ENCODE measurements at regions of chr2 and their contacts with region 1.

Region 1: GRCh38 chr2:112542123-112542983 is at the start of gene POLR1B:
- DNase-seq: peak; percentile 58 to 79
- H3K4me3 ChIP-seq: peak within 1 kb of the TSS; percentile 72 to 90 (median 78)
- H3K27ac ChIP-seq: peak within 1 kb of the TSS; percentile 84 to 92
- H3K4me1 ChIP-seq: peaks cover 0 to 9% of the 10 kb centered on the region in 2 donors
- H3K27me3 ChIP-seq: no peaks in the 10 kb centered on the region
- CTCF ChIP-seq: no peak
- POLR2A ChIP-seq: no peak
- total RNA-seq, gene POLR1B: 7.8 to 23.7 (median 15.7) TPM

Region 2: GRCh38 chr2:111178730-111179405 is 1363.5 kb before region 1 on chr2:
- intact Hi-C with region 1: loop called (anchors 5 kb)
- DNase-seq: no peak
- H3K4me3 ChIP-seq: no peak overlapping the region
- H3K27ac ChIP-seq: no peak overlapping the region
- H3K4me1 ChIP-seq: no peaks in the 10 kb centered on the region
- H3K27me3 ChIP-seq: no peaks in the 10 kb centered on the region
- CTCF ChIP-seq: no peak
- POLR2A ChIP-seq: no peak

Region 3: GRCh38 chr2:112156152-112156986 is 386.0 kb before region 1 on chr2:
- intact Hi-C with region 1: no loop called
- DNase-seq: no peak
- H3K4me3 ChIP-seq: peak overlapping the region in 1 of 3 donors; percentile 31
- H3K27ac ChIP-seq: peak overlapping the region; percentile 11 to 78
- H3K4me1 ChIP-seq: no peaks in the 10 kb centered on the region
- H3K27me3 ChIP-seq: no peaks in the 10 kb centered on the region
- CTCF ChIP-seq: no peak
- POLR2A ChIP-seq: no peak